MCF 10A (cell line): ENCODE measurements at regions of chr1 and their contacts with region 1.

Region 1: DNA sequence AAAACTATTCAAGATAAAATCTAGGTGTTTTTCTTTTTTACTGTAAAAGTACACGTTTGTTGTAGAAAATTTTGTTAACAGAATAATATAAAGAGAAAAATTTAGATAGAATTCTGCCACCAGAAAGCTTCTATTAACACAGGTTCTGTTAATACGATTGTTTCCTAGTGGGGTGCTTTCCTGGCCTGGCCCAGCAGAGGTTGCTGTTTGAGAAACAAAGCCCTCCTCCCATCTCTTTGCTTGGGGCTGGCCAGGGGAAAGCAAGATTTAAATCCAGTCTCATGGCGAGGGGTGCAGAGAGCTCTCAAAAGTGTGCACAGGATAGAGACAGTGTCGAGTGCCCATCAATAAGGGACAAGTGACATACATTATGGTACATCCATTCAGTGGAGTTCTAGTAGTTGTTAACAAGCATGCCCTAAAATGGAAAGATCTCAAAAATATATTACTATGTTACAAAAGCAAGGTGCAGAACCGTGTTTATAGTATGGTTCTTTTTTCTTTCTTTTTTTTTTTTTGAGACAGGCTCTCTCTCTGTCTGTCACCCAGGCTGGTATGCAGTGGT is 14.6 kb upstream of the ACBD3 start:
- DNase-seq: peak; percentile 54
- H3K4me3 Mint-ChIP-seq: no peak overlapping the region
- H3K27ac Mint-ChIP-seq: no peak overlapping the region
- H3K4me1 Mint-ChIP-seq: no peaks in the 10 kb centered on the region
- H3K27me3 Mint-ChIP-seq: peaks cover 13% of the 10 kb centered on the region
- CTCF ChIP-seq: peak; percentile 39

Region 2: DNA sequence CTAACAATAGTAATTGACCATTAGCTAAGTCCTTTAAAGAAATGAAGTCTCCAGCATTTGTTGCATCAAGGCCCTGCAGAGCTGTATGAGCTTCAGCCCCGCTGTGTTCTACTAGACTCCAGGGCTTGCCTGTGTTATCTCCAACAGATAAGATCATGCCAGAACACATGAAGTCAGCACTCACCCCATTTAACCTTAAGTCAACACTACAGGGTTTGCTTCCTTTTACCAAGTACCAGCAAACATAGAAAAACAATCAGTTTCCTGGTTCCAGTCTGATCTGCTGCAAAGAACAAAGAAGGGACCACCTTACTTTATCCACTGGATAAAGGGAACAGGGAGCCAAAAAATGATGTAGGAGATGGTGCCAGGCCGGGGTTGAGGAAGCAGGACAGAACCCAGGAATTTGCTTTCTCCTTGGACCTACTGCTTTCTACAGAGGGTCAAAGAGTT is 506.9 kb before region 1 on chr1:
- CTCF ChIA-PET with region 1: no interaction called
- POLR2A ChIA-PET with region 1: no interaction called
- intact Hi-C with region 1: no loop called
- DNase-seq: no peak
- H3K4me3 Mint-ChIP-seq: no peak overlapping the region
- H3K27ac Mint-ChIP-seq: no peak overlapping the region
- H3K4me1 Mint-ChIP-seq: peaks cover 22% of the 10 kb centered on the region
- H3K27me3 Mint-ChIP-seq: no peaks in the 10 kb centered on the region
- CTCF ChIP-seq: no peak

Region 3: GRCh38 chr1:226211181-226211821 is 10.2 kb after region 1 on chr1:
- CTCF ChIA-PET with region 1: interaction called, 20 read pairs
- POLR2A ChIA-PET with region 1: interaction called, 7 read pairs
- intact Hi-C with region 1: no loop called
- DNase-seq: no peak
- H3K4me3 Mint-ChIP-seq: no peak overlapping the region
- H3K27ac Mint-ChIP-seq: no peak overlapping the region
- H3K4me1 Mint-ChIP-seq: no peaks in the 10 kb centered on the region
- H3K27me3 Mint-ChIP-seq: no peaks in the 10 kb centered on the region
- CTCF ChIP-seq: no peak

Region 4: GRCh38 chr1:226217273-226217672 is 16.2 kb after region 1 on chr1:
- CTCF ChIA-PET with region 1: interaction called, 20 read pairs
- POLR2A ChIA-PET with region 1: no interaction called
- intact Hi-C with region 1: no loop called
- DNase-seq: no peak
- H3K4me3 Mint-ChIP-seq: no peak overlapping the region
- H3K27ac Mint-ChIP-seq: no peak overlapping the region
- H3K4me1 Mint-ChIP-seq: no peaks in the 10 kb centered on the region
- H3K27me3 Mint-ChIP-seq: no peaks in the 10 kb centered on the region
- CTCF ChIP-seq: no peak

Region 5: GRCh38 chr1:226223786-226224244 is 22.7 kb after region 1 on chr1:
- CTCF ChIA-PET with region 1: interaction called, 11 read pairs
- POLR2A ChIA-PET with region 1: no interaction called
- intact Hi-C with region 1: no loop called
- DNase-seq: no peak
- H3K4me3 Mint-ChIP-seq: no peak overlapping the region
- H3K27ac Mint-ChIP-seq: no peak overlapping the region
- H3K4me1 Mint-ChIP-seq: no peaks in the 10 kb centered on the region
- H3K27me3 Mint-ChIP-seq: no peaks in the 10 kb centered on the region
- CTCF ChIP-seq: no peak

Region 6: GRCh38 chr1:226381226-226381998 is 180.3 kb after region 1 on chr1:
- CTCF ChIA-PET with region 1: no interaction called
- POLR2A ChIA-PET with region 1: no interaction called
- intact Hi-C with region 1: no loop called
- DNase-seq: no peak
- H3K4me3 Mint-ChIP-seq: no peak overlapping the region
- H3K27ac Mint-ChIP-seq: no peak overlapping the region
- H3K4me1 Mint-ChIP-seq: no peaks in the 10 kb centered on the region
- H3K27me3 Mint-ChIP-seq: no peaks in the 10 kb centered on the region
- CTCF ChIP-seq: no peak